Psoas muscle (tissue), 8 donors: ENCODE measurements at regions of chr3 and their contacts with region 1.

Region 1: DNA sequence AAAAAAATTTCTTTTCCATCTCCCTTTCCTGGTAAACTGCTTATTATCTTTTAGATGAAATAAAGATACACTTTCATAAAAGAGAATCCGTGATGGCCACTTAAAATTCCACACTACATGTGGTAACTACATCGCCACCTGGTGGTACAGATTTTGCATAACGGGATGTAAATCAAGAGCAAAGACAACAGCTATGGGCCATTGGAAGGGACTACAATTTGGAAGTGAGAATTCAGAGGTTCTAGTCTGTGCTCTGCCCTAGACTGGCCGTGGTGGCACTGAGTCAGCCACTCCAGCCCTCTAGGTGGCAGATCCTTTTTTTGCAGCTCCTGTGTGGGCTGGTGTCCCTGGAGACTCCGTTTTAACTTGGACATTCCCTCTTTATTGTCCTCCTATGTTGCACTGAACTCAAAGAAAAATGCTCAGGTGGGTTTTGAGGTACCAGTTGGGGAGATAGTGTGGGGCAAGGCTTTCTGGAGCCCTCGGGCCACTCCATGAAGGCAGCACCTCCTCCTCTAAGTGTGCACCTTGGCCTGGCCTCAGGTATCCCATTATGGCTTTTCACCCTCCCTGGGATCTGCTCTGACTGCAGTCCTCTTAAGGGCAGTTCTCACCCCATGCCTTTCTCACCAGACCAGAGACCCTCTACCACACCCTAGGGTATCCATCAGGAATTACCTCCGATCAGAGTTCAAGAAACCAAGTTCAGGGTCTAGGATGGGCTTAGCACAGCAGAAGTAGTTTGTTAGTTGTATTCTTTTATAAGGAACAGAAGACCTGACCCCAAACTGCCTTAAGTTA is 54.9 kb downstream of the SPSB4 start:
- DNase-seq: peak; percentile 28 to 29
- ATAC-seq: peak; percentile 26 to 63 (median 38)
- H3K4me3 ChIP-seq: no peak overlapping the region
- H3K27ac ChIP-seq: no peak overlapping the region
- H3K4me1 ChIP-seq: peaks cover 21% of the 10 kb centered on the region
- H3K27me3 ChIP-seq: no peaks in the 10 kb centered on the region
- CTCF ChIP-seq: peak; percentile 90

Region 2: GRCh38 chr3:141011232-141011996 is 94.6 kb before region 1 on chr3:
- intact Hi-C with region 1: loop called (anchors 2 to 5 kb)
- DNase-seq: peak; percentile 82 to 90
- ATAC-seq: peak; percentile 77 to 89 (median 87)
- H3K4me3 ChIP-seq: no peak overlapping the region
- H3K27ac ChIP-seq: no peak overlapping the region
- H3K4me1 ChIP-seq: peaks cover 6% of the 10 kb centered on the region
- H3K27me3 ChIP-seq: no peaks in the 10 kb centered on the region
- CTCF ChIP-seq: peak; percentile 73

Region 3: DNA sequence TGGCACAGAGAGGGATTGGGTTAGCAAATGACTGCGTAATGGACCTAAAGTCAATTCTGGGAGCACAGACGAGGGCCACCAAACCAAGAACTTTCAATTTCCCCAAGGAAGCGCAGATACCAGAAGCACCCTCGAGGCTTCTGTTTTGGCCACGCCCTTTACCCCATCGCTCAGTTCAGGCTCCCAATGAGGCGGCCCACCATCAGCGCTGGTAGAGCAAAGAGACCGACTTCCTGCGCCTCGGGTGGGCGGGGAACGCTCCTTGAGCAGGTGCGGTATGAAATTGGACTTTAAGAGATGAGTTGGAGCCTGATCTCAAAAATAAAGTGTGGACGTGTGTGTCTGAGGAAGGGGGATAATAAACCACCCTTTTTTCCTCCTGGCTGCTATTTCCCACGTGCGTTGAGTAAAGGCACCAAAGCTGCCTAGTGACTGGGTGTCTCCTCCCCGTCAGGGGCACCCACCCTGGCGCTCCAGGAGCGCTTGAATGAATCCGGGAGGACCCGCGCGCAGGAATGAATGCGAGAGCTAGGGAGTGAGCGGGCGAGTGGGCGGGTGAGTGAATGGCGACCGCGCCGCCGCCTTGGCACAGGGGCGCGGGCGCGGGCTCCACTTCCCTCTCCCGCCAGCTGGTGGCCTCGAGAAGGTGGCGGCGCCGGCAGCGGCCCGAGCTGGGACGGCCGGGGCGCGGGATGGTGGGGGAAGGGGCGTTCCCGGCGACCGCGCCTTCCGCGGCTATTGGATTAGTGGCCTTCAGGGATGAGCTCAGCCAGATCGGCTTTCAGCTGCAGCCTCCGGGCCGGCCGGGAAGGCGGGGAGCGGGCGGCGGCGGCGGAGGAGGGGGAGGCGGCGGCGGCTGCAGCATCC is 55.2 kb before region 1 on chr3 and contains the start of gene SPSB4:
- intact Hi-C with region 1: loop called (anchors 2 to 5 kb)
- DNase-seq: peak; percentile 81 to 93
- ATAC-seq: peak; percentile 94 to 98 (median 96)
- H3K4me3 ChIP-seq: peak within 1 kb of the TSS; percentile 66
- H3K27ac ChIP-seq: peak within 1 kb of the TSS; percentile 68
- H3K4me1 ChIP-seq: peaks cover 8% of the 10 kb centered on the region
- H3K27me3 ChIP-seq: peaks cover 0 to 12% (median 0%) of the 10 kb centered on the region in 3 donors
- CTCF ChIP-seq: peak; percentile 63
- total RNA-seq, gene SPSB4: 0.40 to 1.9 (median 0.59) TPM